ENCODE measurements at regions of chr13 and their contacts with region 1.

Region 1: DNA sequence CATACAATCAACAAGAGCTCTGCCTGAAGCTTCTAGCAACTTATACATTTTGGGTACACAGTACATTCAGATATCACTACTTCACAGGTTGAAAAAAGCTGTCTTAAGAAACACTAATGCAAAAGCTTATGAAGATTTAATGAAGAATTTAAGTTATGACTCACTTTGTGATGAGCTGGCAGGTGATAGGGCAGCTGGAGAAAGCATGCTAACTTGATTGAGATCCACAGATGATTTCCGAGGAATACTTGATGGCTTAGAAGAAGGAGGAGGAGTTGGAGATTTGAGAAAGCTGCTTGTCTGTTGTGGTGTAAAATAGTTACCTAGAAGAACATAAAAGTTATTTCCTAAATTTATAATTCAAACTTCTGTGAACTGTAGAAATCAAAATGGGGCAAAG is 23.3 kb downstream of the EXOSC8 start:
- DNase-seq: no peak
- H3K4me3 Mint-ChIP-seq: no peak overlapping the region
- H3K27ac Mint-ChIP-seq: no peak overlapping the region
- H3K4me1 Mint-ChIP-seq: no peaks in the 10 kb centered on the region
- H3K27me3 Mint-ChIP-seq: no peaks in the 10 kb centered on the region

Region 2: DNA sequence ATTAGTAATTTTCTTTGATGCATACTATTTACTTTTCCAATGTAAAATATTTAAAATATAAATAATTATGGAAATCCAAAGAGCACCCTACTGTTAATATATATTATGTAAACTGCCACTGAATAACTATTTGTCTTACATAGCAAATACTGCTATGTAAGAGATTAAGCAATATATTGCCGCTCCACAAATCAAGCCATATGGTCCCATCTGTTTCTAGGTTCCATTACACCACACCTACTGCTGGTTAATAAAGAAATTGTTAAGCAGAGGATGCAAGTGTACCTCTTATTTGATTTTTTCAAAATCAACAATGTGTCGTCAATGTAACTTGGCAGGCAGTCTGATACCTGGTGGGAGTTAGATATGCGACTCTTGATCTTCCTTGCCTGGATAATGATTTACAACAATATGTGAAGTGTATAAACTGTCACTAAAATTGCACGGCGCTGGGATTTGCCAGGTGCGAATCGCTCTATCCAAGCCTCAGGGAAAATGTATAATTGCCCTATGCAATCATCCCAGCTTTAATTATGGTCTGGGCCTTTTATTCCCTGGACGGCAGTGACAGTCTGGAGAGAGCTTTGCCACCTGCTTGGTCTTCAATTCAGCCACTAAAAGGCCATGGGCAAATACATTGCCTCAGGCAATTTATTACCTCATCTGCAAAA is 119.8 kb before region 1 on chr13:
- intact Hi-C with region 1: no loop called
- DNase-seq: no peak
- H3K4me3 Mint-ChIP-seq: no peak overlapping the region
- H3K27ac Mint-ChIP-seq: no peak overlapping the region
- H3K4me1 Mint-ChIP-seq: no peaks in the 10 kb centered on the region
- H3K27me3 Mint-ChIP-seq: peaks cover 20% of the 10 kb centered on the region

Region 3: DNA sequence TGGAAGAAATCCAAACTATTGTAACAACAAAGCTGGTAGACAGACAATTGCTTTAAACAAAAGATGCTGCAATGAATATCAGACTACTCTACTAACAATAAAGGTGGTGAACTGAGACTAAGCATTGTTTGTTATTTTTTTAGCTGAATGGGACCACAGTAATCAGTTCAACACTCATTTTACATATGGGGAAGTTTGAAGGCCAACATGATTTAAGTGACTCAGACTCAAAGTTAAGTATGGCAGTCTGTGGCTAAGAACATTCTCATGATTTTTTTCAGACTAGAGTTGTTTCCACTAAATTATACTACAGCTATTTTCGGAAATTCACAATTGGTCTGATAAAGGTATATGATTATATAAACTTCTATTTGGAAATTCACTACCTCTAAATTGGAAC is 12.9 kb before region 1 on chr13:
- intact Hi-C with region 1: loop called (anchors 2 kb)
- DNase-seq: no peak
- H3K4me3 Mint-ChIP-seq: no peak overlapping the region
- H3K27ac Mint-ChIP-seq: no peak overlapping the region
- H3K4me1 Mint-ChIP-seq: peaks cover 10% of the 10 kb centered on the region
- H3K27me3 Mint-ChIP-seq: no peaks in the 10 kb centered on the region

Measured in activated T-helper 2 cell treated with anti-CD3 and anti-CD28 coated beads, Interferon-gamma antibody, Interleukin-2, Interleukin-4, amounts not matched to agents 10 μg/mL and 5 μg/mL and 100 μg/mL, durations not matched to agents 14 hours and 24 hours and 36 hours (primary cell).